Activated CD8-positive, alpha-beta T cell treated with anti-CD3 and anti-CD28 coated beads, Interleukin-2, amount 10 ng/mL, durations not matched to agents 7 days and 5 days (primary cell): ENCODE measurements at regions of chr19 and their contacts with region 1.

Region 1: DNA sequence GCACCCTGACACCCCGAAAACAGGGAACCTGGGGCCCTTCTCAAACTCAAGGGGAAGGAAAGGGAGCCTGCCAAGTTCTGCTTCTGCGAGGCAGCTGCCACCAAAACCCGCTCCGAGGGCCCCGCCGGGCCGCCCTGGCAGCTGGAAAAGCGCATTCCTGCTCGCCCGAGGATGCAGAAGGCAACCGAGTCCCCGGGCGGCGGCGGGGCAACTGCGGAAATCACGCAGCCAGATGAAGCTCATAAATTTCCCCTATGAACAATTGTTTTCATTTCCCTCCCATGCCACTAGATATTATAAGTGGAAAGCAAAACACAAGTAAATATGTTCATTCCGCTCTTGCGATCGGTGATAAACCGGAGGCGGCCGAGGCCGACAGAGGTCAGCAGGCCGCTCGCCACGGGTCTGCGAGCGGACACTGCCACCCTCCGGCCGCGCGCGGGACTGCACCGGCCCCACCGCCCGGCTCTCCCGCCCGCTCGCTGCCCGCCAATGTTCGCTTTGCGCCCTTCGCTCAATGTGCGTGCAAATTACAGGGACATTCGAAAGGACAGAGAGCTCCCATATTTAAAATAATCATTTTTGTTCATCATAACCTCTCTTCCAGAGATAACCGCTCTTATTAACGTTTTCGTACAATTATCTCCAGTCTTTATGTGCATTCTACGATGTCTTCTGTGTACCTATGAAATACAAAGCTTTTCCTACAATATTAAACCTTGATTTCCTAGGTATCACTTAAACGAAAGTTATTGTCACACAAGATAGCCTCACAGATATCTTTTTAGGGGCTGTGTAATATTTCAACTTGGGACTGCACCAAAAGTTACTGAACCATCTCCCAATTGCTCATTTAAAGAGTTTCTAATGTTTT is 120.8 kb upstream of the ZNF507 start:
- DNase-seq: peak; percentile 61
- ATAC-seq: peak; percentile 91
- H3K4me3 Mint-ChIP-seq: peak overlapping the region; percentile 60
- H3K27ac Mint-ChIP-seq: no peak overlapping the region
- H3K4me1 Mint-ChIP-seq: peaks cover 11% of the 10 kb centered on the region
- H3K27me3 Mint-ChIP-seq: peaks cover 21% of the 10 kb centered on the region

Region 2: DNA sequence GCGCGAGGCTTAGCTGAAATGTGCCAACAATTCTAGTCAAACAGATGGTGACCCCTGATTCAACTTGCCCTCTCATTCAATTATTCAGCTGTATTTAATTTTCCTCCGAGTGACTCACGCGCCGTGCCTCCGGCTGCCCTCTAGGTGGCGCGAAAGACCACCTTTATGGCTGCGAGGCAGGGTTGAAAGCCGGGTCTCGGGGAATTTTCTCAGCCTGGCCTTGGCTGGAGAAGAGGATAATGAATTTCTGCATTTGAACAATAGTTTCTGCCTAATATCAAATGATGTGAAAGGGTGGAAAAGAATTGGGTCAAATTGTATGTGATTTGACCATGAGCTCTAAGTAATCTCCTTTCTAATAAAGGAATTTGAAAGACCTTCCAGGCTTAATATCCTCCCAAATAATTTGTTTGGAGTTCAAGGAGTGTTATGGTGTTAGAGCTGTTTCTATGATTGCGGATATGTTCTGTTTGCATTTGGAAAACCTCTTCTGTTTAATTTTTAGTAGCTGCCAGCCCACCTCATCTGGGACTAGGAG is 1541.5 kb before region 1 on chr19:
- CTCF ChIA-PET with region 1: interaction called, 28 read pairs
- POLR2A ChIA-PET with region 1: no interaction called
- DNase-seq: peak; percentile 59
- ATAC-seq: no peak
- H3K4me3 Mint-ChIP-seq: no peak overlapping the region
- H3K27ac Mint-ChIP-seq: no peak overlapping the region
- H3K4me1 Mint-ChIP-seq: no peaks in the 10 kb centered on the region
- H3K27me3 Mint-ChIP-seq: peaks cover 6% of the 10 kb centered on the region

Region 3: DNA sequence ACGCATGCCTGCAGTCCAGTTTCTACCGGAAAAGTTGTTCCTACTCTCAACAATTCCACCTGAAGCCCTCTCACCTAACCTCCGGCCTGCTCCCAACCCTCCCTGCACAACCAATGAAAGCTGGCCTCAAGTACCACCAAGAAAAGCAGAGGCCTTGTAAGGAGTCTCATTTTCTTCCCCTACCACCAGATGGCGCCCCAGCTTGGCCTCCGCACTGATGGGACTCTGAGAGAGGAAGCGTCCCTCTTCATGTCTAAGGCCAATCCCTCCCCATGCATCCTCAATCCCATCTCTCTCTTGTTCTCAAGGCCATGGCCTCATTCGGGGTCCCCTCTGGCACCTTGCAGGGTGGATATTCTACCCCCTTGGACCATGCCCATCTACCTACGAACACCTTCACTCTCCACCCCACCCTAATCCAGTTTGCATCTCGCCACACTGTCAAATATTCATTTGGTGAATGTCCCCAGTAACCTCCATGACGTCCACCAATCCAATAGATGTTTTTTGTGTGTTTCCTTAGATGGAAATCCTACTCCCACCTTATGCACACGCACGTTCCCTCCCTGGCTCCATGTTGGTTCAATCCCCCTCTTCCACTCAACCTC is 1439.7 kb before region 1 on chr19:
- CTCF ChIA-PET with region 1: interaction called, 13 read pairs
- POLR2A ChIA-PET with region 1: no interaction called
- DNase-seq: peak; percentile 66
- ATAC-seq: peak; percentile 42
- H3K4me3 Mint-ChIP-seq: no peak overlapping the region
- H3K27ac Mint-ChIP-seq: no peak overlapping the region
- H3K4me1 Mint-ChIP-seq: no peaks in the 10 kb centered on the region
- H3K27me3 Mint-ChIP-seq: no peaks in the 10 kb centered on the region

Region 4: DNA sequence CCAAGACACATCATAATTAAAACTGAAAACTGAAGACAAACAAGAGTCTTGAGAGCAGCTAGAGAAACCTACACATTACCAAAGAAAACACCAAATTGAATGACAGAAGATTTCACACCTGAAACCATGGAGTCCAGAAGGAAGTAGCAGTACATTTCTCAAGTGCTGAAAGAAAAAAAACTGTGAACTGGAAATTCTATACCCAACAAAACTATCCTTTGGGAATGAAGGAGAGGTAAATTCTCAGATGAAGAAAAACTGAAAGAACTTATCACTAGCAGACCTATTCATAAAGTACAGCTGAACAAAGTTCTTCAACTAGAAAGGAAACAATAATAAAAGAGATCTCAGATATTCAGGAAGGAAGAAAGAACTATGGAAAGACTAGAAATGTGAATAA is 77.9 kb before region 1 on chr19:
- CTCF ChIA-PET with region 1: no interaction called
- POLR2A ChIA-PET with region 1: no interaction called
- DNase-seq: no peak
- ATAC-seq: no peak
- H3K4me3 Mint-ChIP-seq: no peak overlapping the region
- H3K27ac Mint-ChIP-seq: no peak overlapping the region
- H3K4me1 Mint-ChIP-seq: no peaks in the 10 kb centered on the region
- H3K27me3 Mint-ChIP-seq: no peaks in the 10 kb centered on the region

Region 5: DNA sequence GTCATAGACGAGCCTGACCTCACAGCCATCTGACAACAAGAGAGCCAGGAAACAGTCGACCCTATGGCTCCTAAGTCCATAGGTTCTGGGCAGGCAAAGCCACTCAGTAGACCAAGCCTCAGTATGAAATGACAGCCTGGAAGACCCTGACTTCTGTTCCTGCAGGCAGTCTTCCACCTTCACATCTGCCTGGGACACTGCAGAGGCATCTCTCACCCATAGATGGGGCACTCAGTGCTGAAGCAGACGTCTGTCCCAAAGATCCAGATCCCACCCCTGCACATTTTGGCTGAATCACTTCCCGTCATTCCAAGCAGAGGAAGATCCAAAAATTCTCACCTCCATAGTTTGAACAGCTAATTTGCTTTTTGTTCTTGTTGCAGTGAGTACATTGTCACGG is 18.5 kb before region 1 on chr19:
- CTCF ChIA-PET with region 1: interaction called, 13 read pairs
- POLR2A ChIA-PET with region 1: no interaction called
- DNase-seq: no peak
- ATAC-seq: no peak
- H3K4me3 Mint-ChIP-seq: no peak overlapping the region
- H3K27ac Mint-ChIP-seq: no peak overlapping the region
- H3K4me1 Mint-ChIP-seq: peaks cover 11% of the 10 kb centered on the region
- H3K27me3 Mint-ChIP-seq: no peaks in the 10 kb centered on the region